Mammary epithelial cell (primary cell): ENCODE measurements at regions of chr17 and their contacts with region 1.

Region 1: DNA sequence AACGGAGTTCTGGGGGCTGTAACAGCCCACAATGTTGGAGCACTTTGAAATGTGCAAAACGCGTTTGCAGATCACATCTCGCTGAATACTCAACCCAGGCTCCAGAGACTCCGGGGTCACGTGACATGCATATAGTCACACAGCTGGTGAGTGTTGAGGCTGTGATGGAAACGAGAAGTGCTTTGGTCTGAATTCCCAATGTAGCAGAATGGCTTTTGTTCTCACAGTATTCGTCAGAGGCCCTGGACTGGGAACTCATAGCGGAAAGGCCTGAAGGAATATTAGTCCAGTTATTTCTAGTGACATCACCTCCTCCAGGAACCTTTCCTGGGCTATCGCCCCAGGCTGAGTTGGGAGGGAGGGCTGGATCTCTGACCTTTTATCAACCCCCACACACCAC is 95.8 kb upstream of the CRHR1 start:
- DNase-seq: no peak
- H3K4me3 ChIP-seq: no peak overlapping the region
- H3K27ac ChIP-seq: no peak overlapping the region
- H3K4me1 ChIP-seq: no peaks in the 10 kb centered on the region
- H3K27me3 ChIP-seq: peaks cover 18% of the 10 kb centered on the region
- CTCF ChIP-seq: no peak

Region 2: DNA sequence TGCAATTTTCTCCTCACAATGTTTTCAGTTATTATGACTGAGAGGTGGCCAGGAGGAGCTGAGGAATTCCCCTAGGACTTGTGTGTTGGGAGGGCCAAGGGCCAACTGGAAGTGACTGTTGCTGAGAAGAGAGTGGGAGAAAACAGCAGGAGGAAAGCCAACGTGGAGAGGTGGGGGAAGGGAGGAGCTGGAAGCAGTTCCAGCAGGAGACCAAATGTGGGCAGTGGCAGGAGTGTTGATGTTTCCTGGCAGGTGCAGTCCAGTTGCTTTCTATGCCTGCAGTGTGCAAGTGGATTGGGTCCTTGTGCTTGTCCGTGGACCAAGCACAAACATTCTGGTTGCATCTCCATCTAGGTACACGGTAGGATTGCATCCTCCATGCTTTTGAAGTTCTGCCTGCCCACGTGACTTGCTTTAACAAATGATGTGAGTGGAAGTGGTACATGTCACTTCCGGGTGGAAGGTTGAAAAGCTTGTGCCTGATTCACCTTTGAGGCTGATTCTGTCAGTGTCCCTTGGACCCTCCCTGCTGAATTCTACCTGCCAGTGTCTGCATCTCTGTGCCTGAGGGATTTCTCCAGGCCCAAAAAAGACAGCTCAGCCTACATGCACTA is 41.0 kb after region 1 on chr17:
- CTCF ChIA-PET with region 1: no interaction called
- dilution Hi-C with region 1: loop called (anchors 5 kb)
- in situ Hi-C with region 1: no loop called
- intact Hi-C with region 1: no loop called
- DNase-seq: no peak
- H3K4me3 ChIP-seq: no peak overlapping the region
- H3K27ac ChIP-seq: no peak overlapping the region
- H3K4me1 ChIP-seq: no peaks in the 10 kb centered on the region
- H3K27me3 ChIP-seq: no peaks in the 10 kb centered on the region
- CTCF ChIP-seq: no peak

Region 3: DNA sequence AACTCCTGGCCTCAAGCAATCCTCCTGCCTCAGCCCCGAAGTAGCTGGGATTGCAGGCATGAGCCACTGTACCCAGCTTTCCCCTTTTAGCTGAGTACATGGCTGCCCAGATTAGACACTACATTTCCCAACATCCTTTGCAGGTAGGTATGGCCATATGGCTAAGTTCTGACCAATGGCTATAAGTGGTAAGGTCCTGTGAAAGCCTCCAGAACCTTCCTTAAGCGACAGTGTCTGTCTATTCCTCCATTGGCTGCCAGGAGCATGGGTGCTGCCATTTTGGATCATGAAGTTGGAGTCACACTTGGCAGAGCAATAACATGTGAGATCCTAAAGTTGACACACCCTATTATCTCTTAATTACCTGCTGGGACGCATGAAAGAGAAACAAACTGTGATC is 71.4 kb after region 1 on chr17:
- CTCF ChIA-PET with region 1: no interaction called
- dilution Hi-C with region 1: loop called (anchors 5 kb)
- in situ Hi-C with region 1: no loop called
- intact Hi-C with region 1: no loop called
- DNase-seq: no peak
- H3K4me3 ChIP-seq: no peak overlapping the region
- H3K27ac ChIP-seq: no peak overlapping the region
- H3K4me1 ChIP-seq: no peaks in the 10 kb centered on the region
- H3K27me3 ChIP-seq: peaks cover 4% of the 10 kb centered on the region
- CTCF ChIP-seq: no peak